ENCODE measurements at regions of chr3 and their contacts with region 1.

Region 1: DNA sequence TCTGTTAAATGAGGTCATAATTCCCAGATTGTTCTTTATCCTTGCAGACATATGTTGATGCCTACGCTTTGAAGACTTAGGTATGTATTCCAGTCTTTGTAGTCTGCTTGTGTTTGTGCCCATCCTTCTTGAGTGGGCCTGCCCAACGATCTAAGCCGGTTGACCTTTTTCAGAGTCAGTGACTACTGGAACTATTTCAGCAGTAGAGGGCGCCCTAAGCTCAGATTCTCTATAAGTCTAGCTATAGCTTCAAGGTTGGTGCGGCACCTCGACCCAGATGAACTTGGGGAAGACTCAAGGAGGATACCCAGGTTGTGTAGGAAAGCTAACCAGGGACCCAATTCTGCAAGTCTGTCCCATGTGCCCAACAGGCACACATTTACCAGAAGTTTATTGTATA is 228.8 kb upstream of the PPP2R3A start:
- DNase-seq: no peak
- H3K4me3 ChIP-seq: no peak overlapping the region
- H3K27ac ChIP-seq: no peak overlapping the region
- H3K4me1 ChIP-seq: no peaks in the 10 kb centered on the region
- H3K27me3 ChIP-seq: peaks cover 15% of the 10 kb centered on the region
- CTCF ChIP-seq: peak; percentile 62

Region 2: DNA sequence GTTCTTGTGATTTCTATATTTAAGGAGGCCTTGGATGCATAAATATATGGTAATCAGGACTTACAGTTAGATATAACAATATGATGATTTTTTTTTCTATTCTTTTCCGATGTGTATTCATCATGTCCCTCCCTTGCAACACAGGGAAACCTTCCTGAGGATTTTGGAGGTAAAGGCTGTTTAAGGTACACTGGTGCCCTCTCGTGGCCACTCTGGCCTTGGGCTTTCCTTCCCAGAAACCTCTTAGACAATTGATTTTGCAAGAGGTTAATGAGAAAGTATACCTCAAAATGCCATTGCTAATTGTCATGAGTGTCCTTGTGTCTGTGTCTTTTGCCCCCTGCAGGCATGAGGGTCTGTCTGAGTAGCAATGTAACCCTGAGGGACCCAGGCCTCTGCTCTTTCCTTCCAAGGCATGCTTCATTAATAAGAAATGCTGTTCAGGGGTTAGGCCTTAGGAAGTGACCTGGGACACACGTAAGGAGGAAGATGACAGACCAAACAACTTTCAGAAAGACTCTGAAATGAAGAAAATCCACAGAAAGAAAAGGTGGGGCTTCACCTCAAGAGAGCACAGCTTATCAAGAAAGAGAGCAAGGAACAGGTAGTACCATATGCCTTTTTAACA is 158.5 kb after region 1 on chr3:
- CTCF ChIA-PET with region 1: no interaction called
- POLR2A ChIA-PET with region 1: no interaction called
- intact Hi-C with region 1: loop called (anchors 10 kb)
- DNase-seq: peak; percentile 70 to 76
- H3K4me3 ChIP-seq: no peak overlapping the region
- H3K27ac ChIP-seq: no peak overlapping the region
- H3K4me1 ChIP-seq: peaks cover 20% of the 10 kb centered on the region
- H3K27me3 ChIP-seq: no peaks in the 10 kb centered on the region
- CTCF ChIP-seq: peak; percentile 90

Region 3: GRCh38 chr3:135965129-135965505 is 228.4 kb after region 1 on chr3:
- CTCF ChIA-PET with region 1: no interaction called
- POLR2A ChIA-PET with region 1: no interaction called
- intact Hi-C with region 1: no loop called
- DNase-seq: no peak
- H3K4me3 ChIP-seq: peak overlapping the region; percentile 85
- H3K27ac ChIP-seq: no peak overlapping the region
- H3K4me1 ChIP-seq: peaks cover 26% of the 10 kb centered on the region
- H3K27me3 ChIP-seq: no peaks in the 10 kb centered on the region
- CTCF ChIP-seq: no peak

Measured in PC-9 (cell line).